Posterior cingulate gyrus (tissue), 11 donors: ENCODE measurements at regions of chr20 and their contacts with region 1.

Region 1: GRCh38 chr20:7285918-7286556 is 518.6 kb downstream of the BMP2 start:
- DNase-seq: peak; percentile 42 to 96 (median 80)

Region 2: GRCh38 chr20:6142348-6142993 is 1143.6 kb before region 1 on chr20:
- intact Hi-C with region 1: loop called (anchors 2 kb)
- DNase-seq: peak in 5 of 10 donors; percentile 34 to 55 (median 49)

Region 3: DNA sequence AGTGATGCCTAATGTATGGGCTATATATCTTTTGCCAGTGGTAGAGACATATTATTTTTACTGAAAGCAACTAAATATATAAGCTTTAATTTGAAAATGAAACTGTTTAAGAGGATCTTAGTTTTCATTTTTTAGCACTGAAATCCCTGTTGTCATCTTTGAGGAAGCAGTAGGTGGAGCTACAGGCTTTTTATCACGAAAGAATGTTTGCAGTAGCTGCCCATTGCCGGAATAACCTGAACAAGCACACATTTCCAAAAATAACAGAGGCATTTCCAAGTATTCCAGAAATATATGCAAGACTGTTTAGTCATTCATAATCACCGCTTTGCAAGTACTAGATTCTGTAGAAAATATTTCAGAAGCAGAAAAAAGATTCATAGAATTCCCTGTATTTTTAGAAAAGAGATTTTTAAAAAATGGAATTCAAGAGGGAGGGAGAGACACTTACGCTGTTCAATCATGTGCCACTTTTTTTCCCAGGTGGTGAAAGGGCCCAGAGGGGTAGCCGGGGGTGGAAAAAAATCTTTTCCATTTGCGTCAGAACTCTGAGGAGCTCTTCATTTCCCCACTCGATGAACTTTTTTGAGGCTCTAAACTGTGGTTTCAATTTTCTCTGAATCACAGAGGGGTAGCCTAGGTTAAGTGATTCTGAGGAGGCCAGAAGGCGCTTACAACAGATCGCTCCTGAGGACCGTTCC is 1020.7 kb before region 1 on chr20:
- intact Hi-C with region 1: loop called (anchors 10 kb)
- DNase-seq: no peak

Region 4: DNA sequence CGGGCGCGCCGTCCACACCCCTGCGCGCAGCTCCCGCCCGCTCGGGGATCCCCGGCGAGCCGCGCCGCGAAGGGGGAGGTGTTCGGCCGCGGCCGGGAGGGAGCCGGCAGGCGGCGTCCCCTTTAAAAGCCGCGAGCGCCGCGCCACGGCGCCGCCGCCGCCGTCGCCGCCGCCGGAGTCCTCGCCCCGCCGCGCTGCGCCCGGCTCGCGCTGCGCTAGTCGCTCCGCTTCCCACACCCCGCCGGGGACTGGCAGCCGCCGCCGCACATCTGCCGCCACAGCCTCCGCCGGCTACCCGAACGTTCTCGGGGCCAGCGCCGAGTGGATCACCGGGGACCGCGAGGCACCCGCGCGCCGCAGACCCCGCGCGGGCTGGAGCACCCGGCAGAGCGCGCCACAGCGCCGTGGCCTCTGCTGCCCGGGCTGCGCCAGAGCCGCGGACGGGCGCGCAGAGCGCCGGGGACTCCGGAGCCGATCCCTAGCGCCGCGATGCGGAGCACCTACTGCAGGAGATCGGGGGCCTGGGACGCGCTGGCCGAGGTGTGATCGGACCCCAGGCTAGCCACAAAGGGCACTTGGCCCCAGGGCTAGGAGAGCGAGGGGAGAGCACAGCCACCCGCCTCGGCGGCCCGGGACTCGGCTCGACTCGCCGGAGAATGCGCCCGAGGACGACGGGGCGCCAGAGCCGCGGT is 518.4 kb before region 1 on chr20 and contains the start of gene BMP2:
- intact Hi-C with region 1: loop called (anchors 1 kb)
- DNase-seq: peak; percentile 32 to 92 (median 42)

Region 5: GRCh38 chr20:6802227-6802626 is 483.8 kb before region 1 on chr20:
- intact Hi-C with region 1: no loop called
- DNase-seq: no peak

Region 6: DNA sequence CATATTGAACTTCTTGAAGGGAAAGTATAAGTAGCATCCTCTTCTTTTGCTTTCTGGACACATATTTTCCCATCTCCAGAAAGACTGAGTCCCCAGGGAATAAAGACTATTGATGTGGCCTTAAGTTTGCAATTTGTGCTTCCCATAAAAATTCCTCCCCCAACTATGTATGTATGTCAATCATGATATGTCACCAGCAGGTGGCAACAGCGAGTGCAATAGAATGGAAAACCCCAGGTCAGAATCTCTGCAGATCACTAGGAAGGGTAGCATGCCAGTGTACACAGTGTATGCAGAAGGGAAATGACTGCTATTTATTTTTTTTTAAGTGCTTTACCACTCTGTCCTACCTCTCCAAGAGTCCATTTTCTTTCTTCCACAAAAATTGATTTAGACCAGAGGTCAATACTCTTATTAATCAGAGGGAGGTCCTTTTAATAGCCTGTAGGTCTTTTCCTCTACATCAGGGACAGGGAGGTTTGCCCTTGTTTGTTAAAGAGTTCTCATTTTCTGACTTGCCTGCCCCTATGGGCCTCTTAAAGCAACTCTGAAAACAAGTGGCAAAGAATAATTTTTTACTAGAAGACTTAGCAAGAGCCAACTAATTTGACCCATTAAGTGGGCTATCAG is 457.1 kb before region 1 on chr20:
- intact Hi-C with region 1: loop called (anchors 10 kb)
- DNase-seq: peak in 7 of 10 donors; percentile 43 to 84 (median 66)

Region 7: DNA sequence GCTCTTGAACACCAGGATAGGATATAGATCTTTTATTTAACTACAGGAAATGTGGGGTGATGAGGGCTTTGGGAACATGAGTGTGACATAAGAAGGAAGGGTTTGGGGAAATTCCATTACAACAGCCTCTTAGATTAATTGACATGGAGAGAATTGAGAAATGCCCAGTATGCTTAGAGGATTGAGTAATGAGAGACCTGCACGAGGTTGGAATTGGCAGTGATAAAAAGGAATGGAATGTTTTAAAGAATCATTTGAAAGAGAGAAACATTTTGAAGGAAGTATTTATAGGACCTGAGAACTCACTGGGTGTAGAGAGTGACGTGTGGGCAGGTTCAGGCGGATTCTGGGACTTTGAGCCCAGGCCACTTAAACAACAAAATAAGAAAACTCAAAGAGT is 291.6 kb before region 1 on chr20:
- intact Hi-C with region 1: no loop called
- DNase-seq: no peak